ENCODE measurements at regions of chr1 and their contacts with region 1.

Region 1: DNA sequence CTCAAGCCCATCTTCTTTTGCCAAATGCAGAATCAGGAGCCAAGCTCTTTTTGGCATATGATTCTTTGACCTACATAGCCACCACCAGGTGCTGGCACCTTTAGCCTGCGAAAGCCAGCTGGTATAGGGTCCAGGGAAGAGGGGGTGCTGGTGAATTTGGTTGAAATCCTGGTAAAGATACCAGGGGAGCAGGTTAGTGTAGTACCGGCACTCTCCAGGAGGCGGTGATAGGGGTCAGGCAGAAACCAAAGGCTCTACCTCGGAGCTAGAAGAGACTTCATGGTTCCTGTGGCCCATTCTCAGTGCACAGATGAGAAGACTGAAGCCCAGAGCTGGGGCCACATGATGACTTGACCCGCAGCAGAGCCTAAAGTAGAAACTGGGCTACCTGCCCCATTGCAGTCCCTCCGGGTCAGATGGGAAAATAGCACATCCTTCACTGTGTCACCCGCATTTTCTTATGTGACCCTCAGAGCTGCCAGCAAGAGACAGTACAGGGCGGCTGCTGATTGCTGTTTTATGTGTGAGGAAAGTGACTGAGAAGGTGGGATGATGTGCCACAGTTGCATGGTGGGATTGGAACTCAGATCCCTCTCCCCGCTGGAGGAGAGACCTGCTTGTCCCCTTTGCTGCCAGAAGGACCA is 36.0 kb upstream of the IL19 start:
- DNase-seq: peak; percentile 73
- H3K4me3 Mint-ChIP-seq: no peak overlapping the region
- H3K27ac Mint-ChIP-seq: peak overlapping the region; percentile 6
- H3K4me1 Mint-ChIP-seq: peaks cover 9% of the 10 kb centered on the region
- H3K27me3 Mint-ChIP-seq: no peaks in the 10 kb centered on the region
- CTCF ChIP-seq: peak; percentile 97

Region 2: GRCh38 chr1:206744683-206745082 is 10.1 kb after region 1 on chr1:
- CTCF ChIA-PET with region 1: interaction called, 21 read pairs
- POLR2A ChIA-PET with region 1: interaction called, 5 read pairs
- intact Hi-C with region 1: no loop called
- DNase-seq: no peak
- H3K4me3 Mint-ChIP-seq: no peak overlapping the region
- H3K27ac Mint-ChIP-seq: no peak overlapping the region
- H3K4me1 Mint-ChIP-seq: peaks cover 5% of the 10 kb centered on the region
- H3K27me3 Mint-ChIP-seq: peaks cover 8% of the 10 kb centered on the region
- CTCF ChIP-seq: no peak

Region 3: GRCh38 chr1:206766251-206766856 is 31.7 kb after region 1 on chr1:
- CTCF ChIA-PET with region 1: interaction called, 16 read pairs
- POLR2A ChIA-PET with region 1: interaction called, 3 read pairs
- intact Hi-C with region 1: no loop called
- DNase-seq: peak; percentile 29
- H3K4me3 Mint-ChIP-seq: no peak overlapping the region
- H3K27ac Mint-ChIP-seq: no peak overlapping the region
- H3K4me1 Mint-ChIP-seq: no peaks in the 10 kb centered on the region
- H3K27me3 Mint-ChIP-seq: peaks cover 32% of the 10 kb centered on the region
- CTCF ChIP-seq: no peak